PC-3 (cell line): ENCODE measurements at regions of chr15 and their contacts with region 1.

Region 1: GRCh38 chr15:85412956-85413854 is 32.8 kb downstream of the AKAP13 start:
- DNase-seq: peak; percentile 94
- ATAC-seq: peak; percentile 87
- H3K4me3 ChIP-seq: no peak overlapping the region
- H3K27ac ChIP-seq: peak overlapping the region; percentile 96
- H3K4me1 ChIP-seq: peaks cover 66% of the 10 kb centered on the region
- H3K27me3 ChIP-seq: no peaks in the 10 kb centered on the region
- CTCF ChIP-seq: no peak

Region 2: DNA sequence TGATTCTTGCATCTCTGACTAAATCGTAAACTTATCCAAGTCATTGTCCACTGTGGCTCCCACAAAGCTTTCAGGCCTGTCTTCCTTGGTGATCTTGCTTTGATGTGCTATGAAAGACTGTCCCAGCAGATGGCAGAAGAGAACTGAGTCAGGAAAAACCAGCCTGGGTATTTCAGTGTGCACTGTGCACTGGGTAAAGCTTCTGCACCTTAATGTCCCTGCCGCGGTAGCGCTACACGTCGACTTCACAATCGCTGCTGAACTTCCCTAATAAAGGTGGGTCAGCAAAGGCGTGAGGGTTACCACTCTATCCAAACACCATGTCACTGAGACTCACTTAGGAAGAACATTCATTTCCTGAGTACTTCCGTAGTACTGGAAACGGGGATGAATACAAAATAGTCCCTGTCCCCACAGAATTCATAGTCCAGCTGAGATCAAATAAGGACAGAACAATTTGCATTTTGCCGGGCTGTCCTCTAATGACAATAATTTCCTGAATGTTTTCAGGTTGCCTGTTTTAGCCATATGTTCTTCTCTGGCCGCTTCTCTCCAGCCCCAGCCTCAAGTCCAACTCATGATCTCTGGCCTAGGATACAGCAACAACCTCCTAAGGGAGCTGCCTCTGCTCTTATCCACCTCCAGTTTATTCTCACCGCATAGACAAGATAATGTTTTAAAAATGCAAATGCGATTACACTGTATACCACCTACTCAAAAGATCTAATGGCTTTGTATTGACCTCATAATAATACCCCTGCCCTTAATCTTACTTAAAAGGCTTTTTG is 116.4 kb before region 1 on chr15:
- CTCF ChIA-PET with region 1: interaction called, 16 read pairs
- POLR2A ChIA-PET with region 1: interaction called, 4 read pairs
- intact Hi-C with region 1: loop called (anchors 1 kb)
- DNase-seq: peak; percentile 87
- ATAC-seq: peak; percentile 98
- H3K4me3 ChIP-seq: peak overlapping the region; percentile 61
- H3K27ac ChIP-seq: peak overlapping the region; percentile 41
- H3K4me1 ChIP-seq: peaks cover 8% of the 10 kb centered on the region
- H3K27me3 ChIP-seq: no peaks in the 10 kb centered on the region
- CTCF ChIP-seq: peak; percentile 78

Region 3: DNA sequence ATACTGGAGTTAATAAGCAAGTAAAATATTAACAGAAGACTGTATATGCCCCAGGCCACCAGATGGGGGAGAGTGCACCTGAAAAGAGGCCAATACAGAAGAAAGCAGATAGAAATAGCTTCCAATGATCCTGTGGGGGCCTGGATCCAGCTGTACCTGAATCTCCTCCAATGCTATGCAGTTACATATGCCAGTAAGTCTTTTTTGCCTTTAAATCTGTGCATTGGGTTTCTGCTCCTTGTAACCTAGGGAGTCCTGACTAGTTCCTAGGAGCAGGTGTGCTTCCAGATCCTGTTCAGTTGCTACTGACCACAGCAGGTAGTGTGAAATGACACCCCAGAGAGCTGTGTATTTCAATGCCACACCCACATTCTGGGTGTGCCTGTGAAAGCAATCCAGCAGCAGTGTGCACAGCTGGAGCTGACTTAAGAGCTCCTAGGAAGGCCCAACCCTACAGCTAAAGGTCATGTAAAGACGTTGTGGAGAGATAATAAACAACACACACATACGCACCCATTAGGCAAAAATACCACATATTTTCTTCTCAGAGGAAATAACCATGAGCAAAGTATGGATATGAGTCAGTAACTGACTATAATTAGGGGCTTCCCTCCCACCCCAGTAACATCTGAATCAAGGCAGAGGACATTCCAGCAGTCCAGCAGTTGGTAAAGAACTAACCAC is 95.0 kb before region 1 on chr15:
- CTCF ChIA-PET with region 1: no interaction called
- POLR2A ChIA-PET with region 1: no interaction called
- intact Hi-C with region 1: loop called (anchors 5 kb)
- DNase-seq: peak; percentile 67
- ATAC-seq: peak; percentile 66
- H3K4me3 ChIP-seq: no peak overlapping the region
- H3K27ac ChIP-seq: peak overlapping the region; percentile 61
- H3K4me1 ChIP-seq: peaks cover 21% of the 10 kb centered on the region
- H3K27me3 ChIP-seq: no peaks in the 10 kb centered on the region
- CTCF ChIP-seq: peak; percentile 42; the same call in 1 of the 2 replicates

Region 4: GRCh38 chr15:85330901-85331588 is 82.2 kb before region 1 on chr15:
- CTCF ChIA-PET with region 1: interaction called, 19 read pairs
- POLR2A ChIA-PET with region 1: interaction called, 4 read pairs
- intact Hi-C with region 1: loop called (anchors 1 kb)
- DNase-seq: peak; percentile 94
- ATAC-seq: peak; percentile 90
- H3K4me3 ChIP-seq: peak overlapping the region; percentile 20; the same call in 1 of the 2 replicates
- H3K27ac ChIP-seq: peak overlapping the region; percentile 87
- H3K4me1 ChIP-seq: peaks cover 22% of the 10 kb centered on the region
- H3K27me3 ChIP-seq: no peaks in the 10 kb centered on the region
- CTCF ChIP-seq: peak; percentile 88

Region 5: GRCh38 chr15:85380217-85380811 is 32.9 kb before region 1 on chr15 and contains the start of gene AKAP13:
- CTCF ChIA-PET with region 1: interaction called, 3 read pairs
- POLR2A ChIA-PET with region 1: interaction called, 3 read pairs
- intact Hi-C with region 1: loop called (anchors 2 kb)
- DNase-seq: peak; percentile 99
- ATAC-seq: peak; percentile 88
- H3K4me3 ChIP-seq: peak within 1 kb of the TSS; percentile 78
- H3K27ac ChIP-seq: peak within 1 kb of the TSS; percentile 69
- H3K4me1 ChIP-seq: peaks cover 24% of the 10 kb centered on the region
- H3K27me3 ChIP-seq: no peaks in the 10 kb centered on the region
- CTCF ChIP-seq: no peak
- total RNA-seq, gene AKAP13: 36.8 and 46.8 TPM in 2 replicates

Region 6: GRCh38 chr15:85582131-85583079 is 169.2 kb after region 1 on chr15:
- CTCF ChIA-PET with region 1: no interaction called
- POLR2A ChIA-PET with region 1: no interaction called
- intact Hi-C with region 1: loop called (anchors 10 kb)
- DNase-seq: no peak
- ATAC-seq: no peak
- H3K4me3 ChIP-seq: no peak overlapping the region
- H3K27ac ChIP-seq: no peak overlapping the region
- H3K4me1 ChIP-seq: peaks cover 44% of the 10 kb centered on the region
- H3K27me3 ChIP-seq: no peaks in the 10 kb centered on the region
- CTCF ChIP-seq: no peak